Right ventricle myocardium inferior (tissue), 1 donor: ENCODE measurements at regions of chr9 and their contacts with region 1.

Region 1: DNA sequence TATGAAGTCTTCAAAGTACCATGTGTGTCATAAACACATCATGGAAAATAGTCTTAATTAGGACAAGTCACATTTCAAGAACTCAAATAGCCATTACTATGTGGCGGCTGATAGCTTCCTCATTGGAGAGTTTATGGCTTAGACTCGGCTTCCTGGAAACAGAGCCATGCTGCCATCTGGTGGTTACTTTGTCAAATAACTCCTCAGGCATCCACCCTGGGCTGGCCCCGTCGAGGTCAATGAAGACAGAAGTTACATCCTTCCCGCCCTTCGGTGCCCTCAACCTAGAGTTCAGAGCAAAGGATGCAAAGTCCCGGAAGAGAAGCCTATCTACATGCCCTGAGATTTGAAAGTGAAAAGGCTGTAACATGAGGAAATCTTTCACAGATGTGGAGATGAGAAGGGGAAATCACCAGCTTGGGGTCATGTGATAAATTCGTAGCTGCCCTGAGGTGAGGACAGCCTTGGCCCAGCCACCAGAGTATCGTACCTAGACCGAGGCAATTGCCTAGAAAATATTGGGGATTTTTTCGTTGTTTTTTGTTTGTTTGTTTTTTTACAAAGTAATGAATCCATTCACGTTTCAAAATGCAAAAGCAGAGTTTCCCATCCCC is 45.5 kb upstream of the ZNF169 start:
- DNase-seq: peak; percentile 89
- ATAC-seq: peak; percentile 92

Region 2: DNA sequence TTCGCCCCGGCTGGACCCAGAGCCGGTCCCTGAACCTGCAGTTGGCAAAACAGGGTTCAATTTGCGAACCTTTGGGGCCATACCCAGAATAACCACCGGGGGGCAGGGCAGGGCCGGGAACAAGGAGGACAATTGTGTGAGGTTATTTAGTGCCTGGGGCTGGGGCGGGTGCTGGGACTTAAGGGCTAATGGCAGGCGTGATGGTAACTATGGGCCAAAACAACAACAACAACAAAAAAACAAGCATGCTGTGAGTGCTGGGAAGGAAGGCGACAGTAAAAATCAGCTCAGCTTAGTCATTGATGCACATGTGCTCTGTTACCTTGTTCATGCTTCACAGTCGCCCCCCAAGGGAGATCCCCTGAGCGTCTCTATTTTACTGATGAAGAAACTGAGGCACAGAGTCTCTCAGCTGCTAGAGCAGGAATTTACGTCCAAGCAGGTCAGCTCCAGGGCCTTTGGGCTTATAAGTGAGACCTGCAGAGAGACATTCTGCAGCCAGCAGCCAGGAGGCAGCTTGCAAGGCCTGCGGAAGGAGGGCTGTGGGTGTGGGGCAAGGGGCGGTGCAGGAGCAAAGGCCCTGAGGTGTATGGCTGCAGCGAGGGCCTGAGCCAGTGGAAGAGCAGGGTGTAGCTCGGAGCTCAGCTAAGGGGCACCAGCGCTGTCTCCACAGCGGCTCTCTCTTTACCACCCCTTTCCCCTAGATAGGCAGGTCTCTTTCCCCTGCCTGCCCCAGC is 531.2 kb before region 1 on chr9:
- intact Hi-C with region 1: loop called (anchors 5 kb)
- DNase-seq: no peak
- ATAC-seq: no peak

Region 3: DNA sequence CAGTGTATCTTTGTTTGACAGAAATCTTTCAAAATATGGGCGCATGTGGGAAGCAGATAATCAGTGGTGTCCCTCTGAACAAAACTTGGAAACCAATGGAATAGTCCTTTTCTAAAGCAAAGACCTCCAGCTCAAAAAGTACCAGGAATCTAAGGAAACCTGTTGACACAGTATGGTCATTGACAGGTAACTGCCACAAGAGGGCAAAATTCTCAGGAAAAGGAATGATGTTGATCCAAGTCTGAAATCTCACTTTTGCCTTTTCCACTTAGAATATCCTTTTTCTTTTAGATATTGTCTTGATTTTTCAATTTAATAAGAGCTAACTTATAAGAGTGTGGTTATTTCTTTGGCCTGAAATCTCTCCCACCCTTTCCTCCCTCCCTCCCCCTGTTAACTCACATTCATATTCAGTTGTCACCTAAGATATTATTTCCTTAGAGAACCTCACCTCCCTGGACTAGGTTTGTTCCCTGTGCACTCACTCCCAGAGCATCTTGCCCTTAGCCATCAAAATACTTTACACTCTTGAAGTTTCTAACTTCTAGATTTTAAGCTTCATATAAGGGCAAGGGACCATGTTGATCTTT is 199.5 kb before region 1 on chr9:
- intact Hi-C with region 1: loop called (anchors 2 kb)
- DNase-seq: no peak
- ATAC-seq: no peak

Region 4: DNA sequence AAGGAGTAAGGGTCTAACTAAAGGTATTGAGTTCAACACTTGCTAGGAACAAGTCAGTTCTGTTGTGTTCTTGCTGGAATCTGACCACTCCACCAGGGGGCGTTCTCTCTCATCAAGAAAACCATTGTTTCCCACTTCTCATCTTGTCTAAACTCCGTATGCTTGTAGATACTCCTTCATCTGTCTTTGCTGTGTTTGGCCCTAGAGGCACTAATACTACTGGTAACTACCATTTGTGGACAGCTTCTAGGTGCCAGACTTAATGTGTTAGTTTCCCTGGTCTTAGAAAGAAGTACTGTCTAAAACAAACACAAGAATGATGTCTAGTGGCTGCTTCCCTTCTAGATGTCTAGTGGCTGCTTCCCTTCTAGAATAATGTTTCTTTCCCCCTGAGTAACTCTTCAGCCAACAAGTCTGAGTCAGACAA is 148.1 kb before region 1 on chr9:
- intact Hi-C with region 1: loop called (anchors 1 kb)
- DNase-seq: no peak
- ATAC-seq: peak; percentile 74

Region 5: DNA sequence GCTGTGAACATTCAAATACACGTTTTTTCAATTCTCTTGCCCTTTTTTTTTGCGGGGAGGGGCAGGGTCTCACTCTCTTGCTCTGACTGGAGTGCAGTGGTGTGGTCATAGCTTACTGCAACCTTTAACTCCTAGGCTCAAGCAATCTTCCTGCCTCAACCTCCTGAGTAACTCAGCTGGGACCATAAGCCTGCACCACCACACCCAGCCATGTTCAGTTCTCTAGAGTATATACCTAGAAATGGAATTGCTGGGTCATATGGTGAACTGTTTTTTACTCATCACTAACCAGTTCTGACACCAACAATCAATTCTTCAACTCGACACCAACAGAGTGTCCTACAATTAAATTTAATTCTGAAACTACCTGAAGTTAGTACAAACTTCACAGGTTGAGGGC is 40.0 kb before region 1 on chr9:
- intact Hi-C with region 1: loop called (anchors 5 kb)
- DNase-seq: no peak
- ATAC-seq: peak; percentile 30